IMR-90 (cell line): ENCODE measurements at regions of chr2 and their contacts with region 1.

Region 1: DNA sequence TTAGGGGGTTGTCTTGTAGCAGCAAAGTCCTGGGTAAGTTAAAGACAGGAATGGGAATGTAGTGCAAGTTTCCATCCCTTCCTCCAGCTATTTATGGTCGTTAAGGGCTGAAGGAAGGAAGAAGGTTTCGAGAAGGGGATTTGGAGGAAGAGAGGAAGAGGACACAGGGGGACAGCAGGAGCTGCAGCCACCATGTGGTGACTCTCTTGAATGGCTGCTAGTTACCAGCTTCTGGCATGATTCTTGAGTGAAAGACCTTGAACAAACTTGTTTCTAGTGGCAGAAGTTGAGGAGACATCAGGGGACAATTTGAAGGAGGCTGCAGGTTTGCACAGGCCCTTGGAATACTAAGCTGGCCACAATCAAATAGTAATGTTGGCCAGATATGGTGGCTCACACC is 116.6 kb downstream of the MTX2 start:
- DNase-seq: no peak
- ATAC-seq: no peak
- H3K4me3 ChIP-seq: no peak overlapping the region
- H3K27ac ChIP-seq: no peak overlapping the region
- H3K4me1 ChIP-seq: peaks cover 2% of the 10 kb centered on the region; the same call in 1 of the 2 replicates
- H3K27me3 ChIP-seq: peaks cover 4% of the 10 kb centered on the region
- CTCF ChIP-seq: no peak
- POLR2A ChIP-seq: no peak
- RAD21 ChIP-seq: no peak

Region 2: DNA sequence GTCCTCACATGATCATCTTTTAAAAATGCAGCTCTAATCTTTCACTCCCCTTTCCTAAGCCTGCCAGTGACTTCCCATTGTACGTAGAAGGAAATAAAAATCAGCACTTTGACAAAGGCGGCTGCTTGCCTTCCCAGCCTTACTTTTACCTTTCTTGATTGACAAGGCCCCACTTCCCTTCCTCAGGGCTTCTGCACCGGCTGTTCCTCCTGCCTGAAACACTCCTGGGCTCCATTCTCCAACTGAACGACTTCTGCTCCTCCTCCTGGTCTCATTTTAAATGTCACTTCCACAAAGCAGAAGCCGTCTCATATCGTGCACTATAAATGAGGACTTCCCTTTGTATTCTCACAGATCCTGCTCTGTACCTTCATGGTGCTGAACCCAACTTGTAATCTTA is 1864.6 kb after region 1 on chr2:
- CTCF ChIA-PET with region 1: no interaction called
- POLR2A ChIA-PET with region 1: interaction called, 23 read pairs
- dilution Hi-C with region 1: no loop called
- in situ Hi-C with region 1: no loop called
- intact Hi-C with region 1: no loop called
- DNase-seq: no peak
- ATAC-seq: no peak
- H3K4me3 ChIP-seq: no peak overlapping the region
- H3K27ac ChIP-seq: no peak overlapping the region
- H3K4me1 ChIP-seq: no peaks in the 10 kb centered on the region
- H3K27me3 ChIP-seq: no peaks in the 10 kb centered on the region
- CTCF ChIP-seq: no peak
- POLR2A ChIP-seq: no peak
- RAD21 ChIP-seq: no peak